Endothelial cell of umbilical vein (primary cell): ENCODE measurements at regions of chr6 and their contacts with region 1.

Region 1: DNA sequence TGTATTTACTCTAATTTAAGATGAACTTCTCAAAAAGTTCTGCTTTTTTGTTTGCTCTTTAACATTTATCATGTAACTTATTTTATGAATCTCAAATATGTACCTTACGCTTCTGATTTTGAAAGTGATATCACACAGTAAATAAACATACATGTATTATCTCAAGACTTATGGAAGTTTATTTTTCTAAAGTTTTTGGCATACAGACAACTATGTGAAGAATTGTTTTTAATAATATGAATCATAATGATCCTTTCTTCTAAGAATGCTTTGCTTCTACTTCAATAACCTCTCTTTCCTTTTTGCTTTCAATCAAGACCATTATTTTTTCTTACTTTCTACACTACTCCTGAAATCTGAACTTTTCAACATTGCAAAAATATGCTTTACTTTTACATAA is 816.4 kb downstream of the EYS start:
- DNase-seq: peak; percentile 80
- H3K4me3 ChIP-seq: peak overlapping the region in 2 of 3 experiments; percentile 25 to 67
- H3K27ac ChIP-seq: peak overlapping the region; percentile 99
- H3K4me1 ChIP-seq: peaks cover 23% of the 10 kb centered on the region
- H3K27me3 ChIP-seq: no peaks in the 10 kb centered on the region
- CTCF ChIP-seq: no peak
- POLR2A ChIP-seq: no peak

Region 2: GRCh38 chr6:63816982-63817436 is 1073.6 kb before region 1 on chr6:
- CTCF ChIA-PET with region 1: no interaction called
- POLR2A ChIA-PET with region 1: no interaction called
- dilution Hi-C with region 1: no loop called
- intact Hi-C with region 1: no loop called
- DNase-seq: no peak
- H3K4me3 ChIP-seq: no peak overlapping the region
- H3K27ac ChIP-seq: no peak overlapping the region
- H3K4me1 ChIP-seq: no peaks in the 10 kb centered on the region
- H3K27me3 ChIP-seq: peaks cover 0 to 3% of the 10 kb centered on the region in 2 experiments
- CTCF ChIP-seq: peak in 1 of 2 donors; percentile 11
- POLR2A ChIP-seq: no peak

Region 3: DNA sequence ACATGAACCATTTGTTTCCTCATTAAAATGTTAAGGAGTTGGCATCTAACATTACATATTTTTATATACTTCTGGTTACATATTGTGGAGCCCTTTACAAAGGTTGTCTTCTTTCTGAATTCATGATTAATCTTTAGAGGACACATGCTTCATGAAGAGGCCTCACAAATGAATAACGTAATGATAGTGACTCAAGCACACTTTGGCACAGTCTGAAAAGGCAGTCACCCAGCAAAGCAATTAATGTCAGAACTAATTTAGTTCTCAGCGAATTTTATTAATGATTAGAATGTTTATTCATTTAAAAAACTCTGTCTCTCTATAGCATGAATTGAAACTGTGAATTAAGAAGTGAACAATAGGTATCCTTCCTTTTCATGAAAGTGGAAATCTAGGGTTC is 400.8 kb before region 1 on chr6:
- CTCF ChIA-PET with region 1: no interaction called
- POLR2A ChIA-PET with region 1: no interaction called
- dilution Hi-C with region 1: no loop called
- intact Hi-C with region 1: loop called (anchors 10 kb)
- DNase-seq: no peak
- H3K4me3 ChIP-seq: no peak overlapping the region
- H3K27ac ChIP-seq: no peak overlapping the region
- H3K4me1 ChIP-seq: no peaks in the 10 kb centered on the region
- H3K27me3 ChIP-seq: no peaks in the 10 kb centered on the region
- CTCF ChIP-seq: no peak
- POLR2A ChIP-seq: no peak

Region 4: GRCh38 chr6:64831680-64832079 is 58.9 kb before region 1 on chr6:
- CTCF ChIA-PET with region 1: no interaction called
- POLR2A ChIA-PET with region 1: no interaction called
- dilution Hi-C with region 1: no loop called
- intact Hi-C with region 1: loop called (anchors 5 kb)
- DNase-seq: no peak
- H3K4me3 ChIP-seq: no peak overlapping the region
- H3K27ac ChIP-seq: no peak overlapping the region
- H3K4me1 ChIP-seq: no peaks in the 10 kb centered on the region
- H3K27me3 ChIP-seq: no peaks in the 10 kb centered on the region
- CTCF ChIP-seq: no peak
- POLR2A ChIP-seq: no peak

Region 5: GRCh38 chr6:65289491-65289890 is 398.9 kb after region 1 on chr6:
- CTCF ChIA-PET with region 1: no interaction called
- POLR2A ChIA-PET with region 1: no interaction called
- dilution Hi-C with region 1: no loop called
- intact Hi-C with region 1: loop called (anchors 2 kb)
- DNase-seq: peak; percentile 77
- H3K4me3 ChIP-seq: no peak overlapping the region
- H3K27ac ChIP-seq: no peak overlapping the region
- H3K4me1 ChIP-seq: peaks cover 12% of the 10 kb centered on the region
- H3K27me3 ChIP-seq: no peaks in the 10 kb centered on the region
- CTCF ChIP-seq: no peak
- POLR2A ChIP-seq: no peak

Region 6: GRCh38 chr6:65448866-65449265 is 558.3 kb after region 1 on chr6:
- CTCF ChIA-PET with region 1: no interaction called
- POLR2A ChIA-PET with region 1: no interaction called
- dilution Hi-C with region 1: no loop called
- intact Hi-C with region 1: loop called (anchors 5 kb)
- DNase-seq: peak; percentile 15
- H3K4me3 ChIP-seq: no peak overlapping the region
- H3K27ac ChIP-seq: no peak overlapping the region
- H3K4me1 ChIP-seq: no peaks in the 10 kb centered on the region
- H3K27me3 ChIP-seq: no peaks in the 10 kb centered on the region
- CTCF ChIP-seq: no peak
- POLR2A ChIP-seq: no peak